PC-9 (cell line): ENCODE measurements at regions of chr6 and their contacts with region 1.

Region 1: DNA sequence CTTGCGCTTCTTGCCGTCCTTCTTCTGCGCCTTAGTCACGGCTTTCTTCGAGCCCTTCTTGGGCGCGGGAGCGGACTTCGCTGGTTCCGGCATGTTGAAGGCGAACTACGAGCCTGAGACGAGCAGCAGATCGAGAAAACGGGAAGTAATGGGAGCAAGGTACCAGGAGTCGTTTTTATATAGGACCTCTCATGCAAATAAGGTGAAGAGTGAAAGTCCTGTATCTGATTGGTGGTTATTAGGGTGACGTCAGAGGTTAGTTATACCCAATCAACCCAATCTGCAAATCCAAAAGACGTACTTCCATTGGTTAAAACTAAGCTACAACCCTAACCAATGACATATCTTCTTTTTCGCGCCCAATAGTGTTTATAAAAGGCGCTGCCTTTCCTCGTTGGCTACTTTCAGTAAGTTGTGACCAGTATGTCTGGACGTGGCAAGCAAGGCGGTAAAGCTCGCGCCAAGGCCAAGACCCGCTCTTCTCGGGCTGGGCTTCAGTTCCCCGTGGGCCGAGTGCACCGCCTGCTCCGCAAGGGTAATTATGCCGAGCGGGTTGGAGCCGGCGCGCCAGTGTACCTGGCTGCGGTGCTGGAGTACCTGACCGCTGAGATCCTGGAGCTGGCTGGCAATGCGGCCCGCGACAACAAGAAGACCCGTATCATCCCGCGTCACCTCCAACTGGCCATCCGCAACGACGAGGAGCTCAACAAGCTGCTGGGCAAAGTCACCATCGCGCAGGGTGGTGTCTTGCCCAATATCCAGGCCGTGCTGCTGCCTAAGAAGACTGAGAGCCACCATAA is 100.6 kb upstream of the PRSS16 start:
- DNase-seq: peak; percentile 89 to 98
- H3K4me3 ChIP-seq: peak overlapping the region; percentile 91
- H3K27ac ChIP-seq: peak overlapping the region; percentile 75
- H3K4me1 ChIP-seq: peaks cover 2% of the 10 kb centered on the region; the same call in 1 of the 2 replicates
- H3K27me3 ChIP-seq: no peaks in the 10 kb centered on the region
- CTCF ChIP-seq: no peak

Region 2: GRCh38 chr6:26087284-26088115 is 1059.4 kb before region 1 on chr6 and contains the start of gene HFE:
- CTCF ChIA-PET with region 1: no interaction called
- POLR2A ChIA-PET with region 1: interaction called, 11 read pairs
- intact Hi-C with region 1: no loop called
- DNase-seq: peak; percentile 56
- H3K4me3 ChIP-seq: peak within 1 kb of the TSS; percentile 78
- H3K27ac ChIP-seq: peak within 1 kb of the TSS; percentile 72
- H3K4me1 ChIP-seq: peaks cover 27% of the 10 kb centered on the region
- H3K27me3 ChIP-seq: no peaks in the 10 kb centered on the region
- CTCF ChIP-seq: no peak
- total RNA-seq, gene HFE: 33.3 and 46.0 TPM in 2 replicates

Region 3: GRCh38 chr6:26204332-26205165 is 942.4 kb before region 1 on chr6:
- CTCF ChIA-PET with region 1: no interaction called
- POLR2A ChIA-PET with region 1: interaction called, 21 read pairs
- intact Hi-C with region 1: no loop called
- DNase-seq: peak; percentile 91 to 94
- H3K4me3 ChIP-seq: peak overlapping the region; percentile 63
- H3K27ac ChIP-seq: peak overlapping the region; percentile 91
- H3K4me1 ChIP-seq: peaks cover 36% of the 10 kb centered on the region
- H3K27me3 ChIP-seq: no peaks in the 10 kb centered on the region
- CTCF ChIP-seq: 0 out of 2 replicates have a peak, but pooled peaks have one; percentile 20

Region 4: GRCh38 chr6:27132532-27133280 is 14.2 kb before region 1 on chr6:
- CTCF ChIA-PET with region 1: interaction called, 23 read pairs
- POLR2A ChIA-PET with region 1: interaction called, 202 read pairs
- intact Hi-C with region 1: loop called (anchors 1 kb)
- DNase-seq: peak; percentile 95 to 98
- H3K4me3 ChIP-seq: peak overlapping the region; percentile 74
- H3K27ac ChIP-seq: peak overlapping the region; percentile 80
- H3K4me1 ChIP-seq: peaks cover 16% of the 10 kb centered on the region
- H3K27me3 ChIP-seq: no peaks in the 10 kb centered on the region
- CTCF ChIP-seq: no peak

Region 5: DNA sequence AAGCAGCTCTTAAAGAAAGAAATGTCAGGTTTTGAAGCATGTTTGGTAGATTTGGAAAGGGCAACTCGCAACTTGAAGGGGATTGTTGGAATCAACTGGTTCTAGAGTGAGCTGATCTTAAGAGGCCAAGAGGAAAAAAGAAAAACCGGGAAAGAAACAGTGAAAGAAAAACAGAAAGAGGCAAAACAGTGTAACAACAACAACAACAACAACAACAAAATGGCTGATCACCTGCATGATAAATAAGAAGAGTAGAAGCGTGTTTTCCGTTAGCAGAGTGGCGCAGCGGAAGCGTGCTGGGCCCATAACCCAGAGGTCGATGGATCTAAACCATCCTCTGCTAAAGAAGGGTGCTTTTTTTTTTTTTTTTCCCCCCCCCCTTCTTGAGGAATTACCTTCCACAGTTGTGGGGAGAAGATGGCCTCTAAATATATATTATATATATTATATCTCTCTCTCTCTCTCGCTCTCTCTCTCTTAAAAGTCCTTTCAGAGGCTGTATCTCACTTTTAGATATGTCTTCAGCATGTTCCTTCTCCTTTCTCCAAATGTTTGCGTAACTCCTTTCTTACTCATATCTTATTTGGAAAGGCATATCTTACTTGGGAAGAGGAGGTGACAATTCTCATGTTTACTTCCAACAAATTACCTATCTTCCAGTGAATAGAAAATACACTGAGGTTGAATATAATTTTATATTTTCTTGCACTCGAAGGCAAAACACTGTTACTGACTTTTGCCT is 630.9 kb after region 1 on chr6:
- CTCF ChIA-PET with region 1: no interaction called
- POLR2A ChIA-PET with region 1: interaction called, 43 read pairs
- intact Hi-C with region 1: no loop called
- DNase-seq: peak in 1 of 2 experiments; percentile 41
- H3K4me3 ChIP-seq: peak overlapping the region; percentile 52
- H3K27ac ChIP-seq: no peak overlapping the region
- H3K4me1 ChIP-seq: peaks cover 6% of the 10 kb centered on the region
- H3K27me3 ChIP-seq: no peaks in the 10 kb centered on the region
- CTCF ChIP-seq: no peak

Region 6: GRCh38 chr6:27871924-27872638 is 725.2 kb after region 1 on chr6:
- CTCF ChIA-PET with region 1: interaction called, 10 read pairs
- POLR2A ChIA-PET with region 1: interaction called, 6 read pairs
- intact Hi-C with region 1: no loop called
- DNase-seq: peak; percentile 83 to 85
- H3K4me3 ChIP-seq: peak overlapping the region; percentile 67
- H3K27ac ChIP-seq: peak overlapping the region; percentile 70
- H3K4me1 ChIP-seq: peaks cover 7% of the 10 kb centered on the region; the same call in 1 of the 2 replicates
- H3K27me3 ChIP-seq: no peaks in the 10 kb centered on the region
- CTCF ChIP-seq: peak; percentile 36; the same call in 1 of the 2 replicates

Region 7: GRCh38 chr6:28725890-28726348 is 1579.0 kb after region 1 on chr6:
- CTCF ChIA-PET with region 1: no interaction called
- POLR2A ChIA-PET with region 1: interaction called, 16 read pairs
- intact Hi-C with region 1: no loop called
- DNase-seq: no peak
- H3K4me3 ChIP-seq: no peak overlapping the region
- H3K27ac ChIP-seq: no peak overlapping the region
- H3K4me1 ChIP-seq: peaks cover 9% of the 10 kb centered on the region
- H3K27me3 ChIP-seq: no peaks in the 10 kb centered on the region
- CTCF ChIP-seq: no peak